AG04449 (cell line): ENCODE measurements at regions of chr3 and their contacts with region 1.

Region 1: DNA sequence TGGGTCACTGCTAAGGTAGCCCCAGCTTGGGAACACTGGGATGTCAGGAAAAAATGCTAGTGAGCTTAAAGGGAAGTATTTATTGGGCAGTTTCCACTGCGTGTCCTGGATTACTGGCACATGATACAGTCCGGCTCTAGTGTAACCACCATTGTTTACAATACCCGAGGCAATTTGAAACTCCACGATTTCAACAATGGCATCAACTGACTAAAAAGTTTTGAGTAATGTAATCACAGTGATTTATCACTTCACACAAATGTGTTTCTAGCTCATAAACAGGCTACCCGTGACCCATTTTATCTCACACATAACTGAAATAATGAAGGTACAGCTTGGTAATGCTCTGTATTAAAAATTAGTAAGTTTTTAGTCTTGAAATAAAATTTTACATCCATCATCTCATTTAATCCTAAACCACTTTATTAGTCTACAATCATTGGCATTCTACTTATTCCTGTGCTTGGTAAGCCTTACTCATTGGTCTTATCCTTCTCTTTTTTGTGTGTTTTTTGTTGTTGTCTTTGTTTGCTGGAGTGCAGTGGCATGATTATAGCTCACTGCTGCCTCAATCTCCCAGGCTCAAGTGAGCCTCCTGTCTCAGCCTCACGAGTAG is 7.6 kb downstream of the ZMAT3 start:
- DNase-seq: no peak
- H3K4me3 ChIP-seq: no peak overlapping the region
- CTCF ChIP-seq: no peak

Region 2: DNA sequence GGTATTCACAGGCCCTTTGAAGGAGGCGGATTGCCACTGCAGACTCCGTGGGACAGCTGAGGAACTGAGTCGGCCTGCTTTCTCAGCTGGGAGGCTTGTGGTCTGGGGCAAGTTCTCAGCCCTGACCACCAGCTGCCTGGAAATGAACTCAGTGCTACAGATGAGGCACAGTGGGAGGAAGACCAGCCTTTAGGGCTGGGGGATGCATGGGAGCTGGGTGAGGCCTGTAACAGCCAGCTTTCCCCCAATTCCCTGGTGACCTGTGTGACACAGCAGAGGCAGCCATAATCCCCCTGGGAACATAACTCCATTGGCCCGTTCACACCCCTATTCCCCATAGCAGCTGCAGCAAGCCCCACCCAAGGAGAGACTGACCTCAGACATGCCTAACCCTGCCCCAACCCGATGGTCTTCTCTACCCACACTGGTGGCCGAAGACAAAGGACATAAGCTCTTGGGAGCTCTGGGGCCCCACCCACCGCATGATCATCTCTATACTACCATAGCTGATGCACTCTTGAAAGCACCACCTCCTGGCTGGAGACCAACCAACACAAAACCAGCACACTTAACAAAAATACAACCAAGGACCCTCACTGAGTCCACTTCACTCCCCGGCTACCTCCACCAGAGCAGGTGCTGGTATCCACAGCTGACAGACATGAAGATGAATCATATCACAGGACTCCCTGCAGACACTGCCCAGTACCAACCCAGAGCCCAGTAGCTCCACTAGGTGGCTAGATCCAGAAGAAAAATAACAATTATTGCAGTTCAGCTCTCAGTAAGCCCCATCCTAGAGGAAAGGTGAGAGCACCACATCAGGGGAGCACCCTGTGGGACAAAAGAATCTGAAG is 17.3 kb before region 1 on chr3:
- CTCF ChIA-PET with region 1: interaction called, 18 read pairs
- POLR2A ChIA-PET with region 1: no interaction called
- DNase-seq: no peak
- H3K4me3 ChIP-seq: no peak overlapping the region
- CTCF ChIP-seq: no peak